Left lung (tissue), 14 donors: ENCODE measurements at regions of chr1 and their contacts with region 1.

Region 1: DNA sequence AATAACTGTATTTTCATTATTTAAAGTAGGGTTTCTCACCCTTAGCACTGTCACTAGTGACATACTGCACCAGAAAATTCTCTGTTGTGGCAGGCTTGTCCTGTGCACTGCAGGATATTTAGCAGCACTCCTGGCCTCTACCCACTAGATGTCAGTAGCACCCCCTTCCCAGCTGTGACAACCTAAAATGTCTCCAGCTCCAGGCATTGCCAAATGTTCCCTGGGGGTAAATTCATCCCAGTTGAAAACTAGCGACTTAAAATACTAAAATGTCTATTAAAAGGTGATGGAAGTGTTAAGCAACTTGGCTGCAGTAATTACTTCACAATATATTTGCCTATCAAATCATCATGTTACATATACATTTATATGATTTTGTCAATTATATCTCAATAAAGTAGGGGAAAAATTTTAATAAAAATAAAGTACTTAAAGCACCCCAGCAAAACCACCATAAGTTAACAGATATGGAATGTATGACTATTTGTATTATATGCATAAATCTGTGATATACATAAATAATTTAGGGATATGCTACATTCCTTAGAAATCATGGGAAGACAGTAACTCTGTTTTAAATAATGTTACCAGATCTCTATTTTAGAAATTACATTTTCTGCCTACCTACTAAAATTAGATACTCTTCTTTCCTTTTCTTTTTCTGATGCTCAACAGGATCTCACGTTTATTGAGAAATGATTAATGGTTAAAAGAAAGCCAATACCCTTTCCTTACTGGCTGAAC is 74.6 kb downstream of the ARID4B start:
- DNase-seq: peak in 3 of 4 donors; percentile 42 to 73 (median 53)
- ATAC-seq: peak; percentile 99
- H3K4me3 ChIP-seq: no peak overlapping the region
- H3K27ac ChIP-seq: no peak overlapping the region
- H3K4me1 ChIP-seq: peaks cover 0 to under 1% of the 10 kb centered on the region in 2 donors
- H3K27me3 ChIP-seq: no peaks in the 10 kb centered on the region
- CTCF ChIP-seq: peak; percentile 66 to 75

Region 2: GRCh38 chr1:235093696-235094592 is 159.4 kb before region 1 on chr1:
- intact Hi-C with region 1: no loop called
- DNase-seq: peak; percentile 50 to 92 (median 74)
- ATAC-seq: peak; percentile 95
- H3K4me3 ChIP-seq: no peak overlapping the region
- H3K27ac ChIP-seq: no peak overlapping the region
- H3K4me1 ChIP-seq: peaks cover 4 to 12% of the 10 kb centered on the region in 2 donors
- H3K27me3 ChIP-seq: no peaks in the 10 kb centered on the region
- CTCF ChIP-seq: peak; percentile 92

Region 3: DNA sequence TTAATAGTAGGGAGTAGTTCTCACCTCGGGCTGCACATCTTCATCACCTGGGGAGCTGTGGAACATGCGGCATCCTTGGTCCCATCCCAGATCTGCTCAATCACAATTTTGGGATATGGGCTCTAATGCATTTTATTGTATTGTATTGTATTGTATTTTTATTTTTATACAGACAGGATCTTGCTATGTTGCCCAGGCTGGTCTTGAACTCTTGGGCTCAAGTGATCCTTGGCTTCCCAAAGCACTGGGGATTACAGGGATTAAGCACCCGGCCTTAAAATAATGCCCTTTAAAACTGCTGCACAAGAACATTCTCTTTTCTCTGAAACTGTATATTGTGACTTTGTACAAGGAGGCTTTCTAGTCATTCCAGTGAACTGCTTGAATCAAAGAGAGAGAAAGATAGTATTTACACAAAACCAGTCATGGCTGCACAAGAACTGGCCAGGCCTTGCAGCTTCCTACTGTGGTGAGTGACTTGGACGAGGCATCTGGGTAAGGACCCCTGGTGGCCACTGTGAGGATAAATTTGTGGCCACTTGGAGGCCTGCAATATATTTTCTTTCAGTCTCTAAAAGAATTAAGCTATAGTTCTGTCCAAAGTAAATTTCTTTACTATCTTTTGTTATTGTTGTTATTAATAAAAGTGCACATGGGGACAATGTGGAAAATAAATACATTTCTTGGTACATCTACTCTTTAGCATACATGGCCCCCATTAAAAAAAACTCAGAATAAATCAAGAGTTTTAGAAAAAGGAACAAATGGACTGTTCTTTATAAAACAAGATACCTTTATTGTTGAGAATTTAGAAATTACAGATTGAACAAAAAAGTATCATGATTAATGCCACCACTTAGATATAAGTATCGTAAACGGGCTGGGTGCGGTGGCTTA is 161.9 kb after region 1 on chr1:
- intact Hi-C with region 1: loop called in 1 of 2 experiments (anchors 10 kb)
- DNase-seq: peak in 3 of 4 donors; percentile 19 to 63 (median 62)
- ATAC-seq: peak; percentile 94
- H3K4me3 ChIP-seq: no peak overlapping the region
- H3K27ac ChIP-seq: no peak overlapping the region
- H3K4me1 ChIP-seq: no peaks in the 10 kb centered on the region
- H3K27me3 ChIP-seq: no peaks in the 10 kb centered on the region
- CTCF ChIP-seq: peak; percentile 70 to 84

Region 4: GRCh38 chr1:235442788-235443429 is 189.5 kb after region 1 on chr1:
- intact Hi-C with region 1: no loop called
- DNase-seq: no peak
- ATAC-seq: peak; percentile 38
- H3K4me3 ChIP-seq: no peak overlapping the region
- H3K27ac ChIP-seq: no peak overlapping the region
- H3K4me1 ChIP-seq: no peaks in the 10 kb centered on the region
- H3K27me3 ChIP-seq: no peaks in the 10 kb centered on the region
- CTCF ChIP-seq: no peak